ENCODE measurements at regions of chr1 and their contacts with region 1.

Region 1: GRCh38 chr1:109548321-109549267 is at the start of gene GNAI3:
- DNase-seq: peak; percentile 78 to 97 (median 95)
- ATAC-seq: peak; percentile 96
- H3K4me3 ChIP-seq: peak within 1 kb of the TSS; percentile 89
- H3K4me3 Mint-ChIP-seq: peak within 1 kb of the TSS; percentile 90 to 99 (median 97)
- H3K27ac ChIP-seq: peak within 1 kb of the TSS; percentile 93
- H3K27ac Mint-ChIP-seq: peak within 1 kb of the TSS; percentile 89 to 100 (median 99)
- H3K4me1 ChIP-seq: peaks cover 25 to 27% of the 10 kb centered on the region in 2 donors
- H3K4me1 Mint-ChIP-seq: peaks cover 30 to 75% (median 55%) of the 10 kb centered on the region in 7 donors
- H3K27me3 ChIP-seq: no peaks in the 10 kb centered on the region
- H3K27me3 Mint-ChIP-seq: no peaks in the 10 kb centered on the region
- total RNA-seq, gene GNAI3: 4.9 to 9.3 (median 7.0) TPM

Region 2: DNA sequence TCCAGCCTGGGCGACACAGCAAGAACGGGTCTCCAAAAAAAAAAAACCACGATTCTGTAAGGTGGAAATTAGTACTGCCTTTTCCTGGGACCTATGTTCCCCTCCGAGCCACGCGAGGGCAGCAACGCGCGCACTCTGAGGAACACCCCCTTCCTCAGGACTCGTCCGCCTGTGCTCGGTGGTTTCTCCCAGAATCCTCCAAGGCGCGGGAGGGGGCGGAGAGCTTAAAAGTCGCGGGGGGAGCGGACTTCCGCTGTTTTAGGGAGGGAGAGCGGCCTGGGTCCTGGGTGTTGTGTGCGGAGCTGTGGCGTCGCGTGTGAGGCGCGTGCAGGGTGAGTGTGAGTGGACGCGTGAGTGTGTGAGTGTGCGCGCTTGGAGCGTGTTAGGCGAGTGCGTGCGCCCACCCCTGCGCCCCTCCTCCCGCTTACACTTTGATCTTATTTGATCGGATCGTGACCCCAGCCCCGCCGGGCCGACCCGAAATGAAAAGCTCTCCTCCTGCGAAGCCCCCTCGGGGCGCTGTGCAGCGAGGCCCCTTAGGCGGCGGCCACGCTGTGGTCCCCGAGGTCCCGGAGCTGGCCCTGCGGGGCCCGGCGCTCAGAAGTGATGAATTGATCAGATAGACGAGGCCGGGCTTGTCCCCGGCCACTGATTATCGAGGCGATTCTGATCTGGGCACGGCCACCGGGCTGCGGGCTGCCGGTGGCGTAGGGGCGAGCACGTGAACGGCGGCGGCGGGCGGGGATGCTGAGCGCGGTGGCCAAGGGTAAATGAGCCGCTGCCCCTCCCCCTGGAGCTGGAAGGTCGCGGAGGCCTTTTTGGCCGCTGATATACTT is 448.4 kb before region 1 on chr1:
- CTCF ChIA-PET with region 1: no interaction called
- POLR2A ChIA-PET with region 1: interaction called, 6 read pairs
- intact Hi-C with region 1: loop called in 1 of 2 experiments (anchors 2 kb)
- DNase-seq: peak; percentile 90 to 98 (median 97)
- ATAC-seq: peak; percentile 98
- H3K4me3 ChIP-seq: peak overlapping the region; percentile 80
- H3K4me3 Mint-ChIP-seq: peak overlapping the region; percentile 93 to 99 (median 98)
- H3K27ac ChIP-seq: peak overlapping the region; percentile 88
- H3K27ac Mint-ChIP-seq: peak overlapping the region; percentile 92 to 99 (median 96)
- H3K4me1 ChIP-seq: peaks cover 0 to 5% of the 10 kb centered on the region in 2 donors
- H3K4me1 Mint-ChIP-seq: peaks cover 5 to 22% (median 13%) of the 10 kb centered on the region in 7 donors
- H3K27me3 ChIP-seq: no peaks in the 10 kb centered on the region
- H3K27me3 Mint-ChIP-seq: peaks cover 0 to 2% (median 0%) of the 10 kb centered on the region in 5 donors

Region 3: GRCh38 chr1:109161858-109162606 is 386.6 kb before region 1 on chr1:
- CTCF ChIA-PET with region 1: no interaction called
- POLR2A ChIA-PET with region 1: no interaction called
- intact Hi-C with region 1: no loop called
- DNase-seq: peak in 5 of 9 donors; percentile 5 to 45 (median 12)
- ATAC-seq: peak; percentile 88
- H3K4me3 ChIP-seq: no peak overlapping the region
- H3K4me3 Mint-ChIP-seq: peak overlapping the region in 6 of 10 donors; percentile 31 to 72 (median 52)
- H3K27ac ChIP-seq: no peak overlapping the region
- H3K27ac Mint-ChIP-seq: peak overlapping the region in 8 of 9 donors; percentile 58 to 87 (median 75)
- H3K4me1 ChIP-seq: peaks cover 0 to 14% of the 10 kb centered on the region in 2 donors
- H3K4me1 Mint-ChIP-seq: peaks cover 9 to 24% (median 18%) of the 10 kb centered on the region in 7 donors
- H3K27me3 ChIP-seq: no peaks in the 10 kb centered on the region
- H3K27me3 Mint-ChIP-seq: no peaks in the 10 kb centered on the region

Region 4: DNA sequence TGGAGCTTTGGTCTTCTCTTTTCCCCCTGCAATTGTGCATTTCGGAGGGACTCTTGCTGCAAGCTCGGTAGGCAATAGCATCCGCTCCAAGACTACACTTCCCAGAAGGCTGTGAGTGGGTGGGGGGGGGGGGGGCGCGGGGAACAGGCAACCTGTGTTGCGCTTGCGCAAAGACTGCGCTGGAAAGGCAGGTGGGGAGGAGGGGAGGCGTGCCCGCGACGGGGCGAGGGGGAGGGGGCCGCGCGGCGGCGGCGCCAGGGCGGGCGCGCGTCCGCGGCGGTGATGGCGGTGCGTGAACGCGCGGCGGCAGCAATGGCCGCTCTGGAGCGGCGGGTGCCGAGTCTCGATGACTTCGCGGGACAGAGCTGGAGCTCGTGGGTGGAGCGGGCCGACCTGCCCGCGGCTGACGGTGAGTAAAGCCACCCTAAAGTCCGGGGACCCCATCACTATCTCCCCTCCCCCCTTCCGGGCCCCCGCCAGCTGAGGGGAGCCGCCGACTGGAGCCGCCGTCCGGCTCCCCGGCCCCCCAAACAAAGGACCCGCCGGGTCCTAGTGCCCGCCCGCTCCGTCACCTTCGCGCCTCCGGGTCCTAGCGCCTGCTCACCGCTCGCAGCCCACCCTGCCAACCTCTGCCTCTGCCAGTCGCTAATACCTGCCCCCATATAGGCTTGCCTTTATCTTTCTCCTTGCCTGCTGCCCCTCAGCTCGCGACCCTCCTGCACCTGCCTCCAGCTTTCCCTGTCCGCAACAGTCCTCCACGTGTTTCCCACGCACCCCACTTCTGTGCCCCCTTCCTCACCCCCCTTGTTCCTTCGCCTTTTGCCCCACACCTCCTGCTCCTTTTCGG is 64.7 kb before region 1 on chr1 and contains the start of gene ATXN7L2:
- CTCF ChIA-PET with region 1: interaction called, 1,240 read pairs
- POLR2A ChIA-PET with region 1: interaction called, 15 read pairs
- intact Hi-C with region 1: loop called in 1 of 2 experiments (anchors 1 kb)
- DNase-seq: peak; percentile 89 to 95 (median 93)
- ATAC-seq: peak; percentile 91
- H3K4me3 ChIP-seq: peak within 1 kb of the TSS; percentile 98
- H3K4me3 Mint-ChIP-seq: peak within 1 kb of the TSS; percentile 93 to 99 (median 96)
- H3K27ac ChIP-seq: peak within 1 kb of the TSS; percentile 88
- H3K27ac Mint-ChIP-seq: peak within 1 kb of the TSS; percentile 83 to 97 (median 92)
- H3K4me1 ChIP-seq: peaks cover 9 to 14% of the 10 kb centered on the region in 2 donors
- H3K4me1 Mint-ChIP-seq: peaks cover 27 to 44% (median 35%) of the 10 kb centered on the region in 7 donors
- H3K27me3 ChIP-seq: no peaks in the 10 kb centered on the region
- H3K27me3 Mint-ChIP-seq: peaks cover 0 to 23% (median under 1%) of the 10 kb centered on the region in 5 donors
- total RNA-seq, gene ATXN7L2: 10.5 to 12.8 (median 11.7) TPM

Region 5: GRCh38 chr1:109564194-109564878 is 15.7 kb after region 1 on chr1:
- CTCF ChIA-PET with region 1: interaction called, 4 read pairs
- POLR2A ChIA-PET with region 1: interaction called, 22 read pairs
- intact Hi-C with region 1: loop called in 1 of 2 experiments (anchors 1 kb)
- DNase-seq: no peak
- ATAC-seq: no peak
- H3K4me3 ChIP-seq: no peak overlapping the region
- H3K4me3 Mint-ChIP-seq: peak overlapping the region in 4 of 10 donors; percentile 7 to 54 (median 27)
- H3K27ac ChIP-seq: no peak overlapping the region
- H3K27ac Mint-ChIP-seq: peak overlapping the region in 6 of 9 donors; percentile 16 to 66 (median 52)
- H3K4me1 ChIP-seq: peaks cover 12 to 13% of the 10 kb centered on the region in 2 donors
- H3K4me1 Mint-ChIP-seq: peaks cover 42 to 77% (median 64%) of the 10 kb centered on the region in 7 donors
- H3K27me3 ChIP-seq: no peaks in the 10 kb centered on the region
- H3K27me3 Mint-ChIP-seq: no peaks in the 10 kb centered on the region

Region 6: DNA sequence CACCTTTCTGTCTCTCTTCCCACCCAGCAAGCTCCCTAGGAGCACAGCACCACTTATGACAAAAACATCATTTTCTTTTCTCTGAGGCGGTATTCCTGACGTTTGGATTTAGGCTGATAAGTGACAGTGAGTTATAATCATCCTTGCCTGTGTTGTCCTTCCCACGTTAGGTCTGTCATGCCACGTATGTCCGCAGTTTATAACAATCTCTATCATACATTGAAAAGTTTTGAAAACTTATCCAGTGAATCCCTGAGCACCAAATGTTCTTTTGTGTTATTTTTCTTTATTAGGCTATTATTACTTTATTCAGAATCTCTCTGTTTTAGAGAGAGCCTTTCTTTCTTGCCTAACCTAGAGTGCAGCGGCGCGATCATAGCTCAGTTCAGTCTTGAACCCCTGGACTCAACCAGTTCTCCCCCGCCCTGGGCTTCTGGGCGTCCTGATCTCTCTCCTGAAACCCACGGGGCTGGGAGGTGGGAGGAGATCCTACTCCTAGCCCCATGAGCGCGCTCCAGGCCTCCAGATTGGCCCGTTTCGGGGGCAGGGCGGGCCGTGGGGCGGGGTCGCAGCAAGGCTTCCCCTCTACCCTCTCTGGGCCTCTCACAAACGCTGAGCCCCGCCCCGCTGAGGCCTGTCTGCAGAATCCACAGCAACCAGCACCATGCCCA is 119.0 kb after region 1 on chr1 and contains the start of gene GSTM2:
- CTCF ChIA-PET with region 1: interaction called, 3 read pairs
- POLR2A ChIA-PET with region 1: no interaction called
- intact Hi-C with region 1: loop called in 1 of 2 experiments (anchors 1 kb)
- DNase-seq: peak; percentile 49 to 87 (median 82)
- ATAC-seq: peak; percentile 100
- H3K4me3 ChIP-seq: peak within 1 kb of the TSS; percentile 52
- H3K4me3 Mint-ChIP-seq: peak within 1 kb of the TSS; percentile 75 to 92 (median 84)
- H3K27ac ChIP-seq: peak within 1 kb of the TSS; percentile 49
- H3K27ac Mint-ChIP-seq: peak within 1 kb of the TSS; percentile 38 to 90 (median 77)
- H3K4me1 ChIP-seq: peaks cover 0 to 11% of the 10 kb centered on the region in 2 donors
- H3K4me1 Mint-ChIP-seq: peaks cover 17 to 30% (median 24%) of the 10 kb centered on the region in 7 donors
- H3K27me3 ChIP-seq: no peaks in the 10 kb centered on the region
- H3K27me3 Mint-ChIP-seq: no peaks in the 10 kb centered on the region
- total RNA-seq, gene GSTM2: 52.2 to 201 (median 109) TPM

Region 7: DNA sequence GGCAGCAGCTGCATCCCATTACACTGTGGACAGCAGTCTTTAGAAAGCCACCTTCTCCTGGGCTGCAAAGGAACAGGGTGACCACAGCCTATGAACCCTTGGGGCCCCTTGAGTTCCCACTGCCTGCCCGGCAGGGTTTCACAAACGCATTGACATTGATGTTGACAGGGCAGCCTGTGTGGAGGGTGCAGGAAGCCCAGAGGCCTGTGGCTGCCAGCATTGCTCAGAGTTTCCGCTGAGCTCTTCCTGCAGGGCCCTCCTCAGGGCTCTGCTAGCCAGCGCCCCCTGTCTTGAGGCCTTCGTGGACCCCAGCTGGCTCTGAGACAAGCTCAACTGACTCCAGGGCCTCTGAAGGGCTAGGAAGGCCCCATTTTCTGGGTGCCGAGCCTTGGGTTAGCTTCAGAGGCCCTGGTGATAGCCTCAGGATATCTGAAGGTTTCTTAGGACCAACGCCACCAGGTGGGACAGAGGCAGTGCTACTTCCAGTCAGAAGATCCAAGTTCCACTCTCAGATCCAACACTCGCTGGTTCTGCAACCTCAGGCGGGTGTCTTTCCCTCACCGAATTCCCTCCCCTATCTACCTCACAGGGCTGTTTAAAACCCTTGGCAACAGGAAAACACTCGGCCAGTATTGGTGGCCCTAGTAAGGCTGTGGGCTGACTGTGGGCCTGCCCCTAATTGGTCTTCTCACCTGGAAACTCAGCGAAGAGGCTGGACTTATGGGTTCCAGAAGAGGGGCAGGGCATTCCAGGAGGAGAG is 242.3 kb after region 1 on chr1:
- CTCF ChIA-PET with region 1: interaction called, 3 read pairs
- POLR2A ChIA-PET with region 1: no interaction called
- intact Hi-C with region 1: loop called (anchors 5 kb)
- DNase-seq: peak; percentile 47 to 78 (median 67)
- ATAC-seq: peak; percentile 93
- H3K4me3 ChIP-seq: peak overlapping the region; percentile 1
- H3K4me3 Mint-ChIP-seq: peak overlapping the region in 8 of 10 donors; percentile 26 to 62 (median 40)
- H3K27ac ChIP-seq: peak overlapping the region; percentile 44
- H3K27ac Mint-ChIP-seq: peak overlapping the region in 8 of 9 donors; percentile 49 to 94 (median 84)
- H3K4me1 ChIP-seq: peaks cover 51 to 52% of the 10 kb centered on the region in 2 donors
- H3K4me1 Mint-ChIP-seq: peaks cover 38 to 88% (median 71%) of the 10 kb centered on the region in 7 donors
- H3K27me3 ChIP-seq: no peaks in the 10 kb centered on the region
- H3K27me3 Mint-ChIP-seq: no peaks in the 10 kb centered on the region

Region 8: DNA sequence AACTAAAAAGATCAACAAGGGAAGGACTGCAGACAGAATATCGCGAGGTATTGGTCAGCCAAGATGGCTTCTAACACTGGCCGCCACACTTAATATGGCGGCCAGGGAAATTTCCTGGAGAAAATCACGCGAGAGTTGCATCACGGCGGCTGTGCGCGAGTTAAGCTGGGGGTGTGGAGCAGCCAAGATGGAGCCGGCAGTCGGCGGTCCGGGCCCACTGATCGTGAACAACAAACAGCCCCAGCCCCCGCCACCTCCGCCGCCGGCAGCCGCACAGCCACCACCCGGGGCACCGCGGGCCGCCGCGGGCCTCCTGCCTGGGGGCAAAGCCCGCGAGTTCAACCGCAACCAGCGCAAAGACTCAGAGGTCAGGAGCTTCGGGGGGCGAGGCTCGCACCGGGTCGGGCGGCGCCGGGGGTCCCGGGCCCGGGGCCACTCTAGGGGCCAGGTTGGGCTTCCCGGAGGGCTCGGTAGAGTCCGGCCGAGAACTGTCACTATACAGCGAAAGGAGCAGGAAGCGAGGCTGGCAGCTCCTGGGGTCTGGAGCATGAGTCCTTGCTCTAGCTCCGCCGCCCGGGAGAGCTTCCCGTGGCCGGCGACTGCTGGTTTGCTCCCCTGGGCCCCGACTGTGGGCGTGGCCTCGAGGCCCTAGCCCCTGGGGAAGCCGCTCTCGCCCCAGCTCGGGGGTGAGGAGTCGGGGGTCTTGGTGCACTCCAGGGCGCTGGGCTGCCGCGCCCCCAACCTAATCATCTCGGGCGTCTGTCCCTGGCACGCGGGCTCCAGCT is 486.0 kb after region 1 on chr1 and contains the start of gene STRIP1:
- CTCF ChIA-PET with region 1: no interaction called
- POLR2A ChIA-PET with region 1: interaction called, 3 read pairs
- intact Hi-C with region 1: loop called (anchors 1 kb)
- DNase-seq: peak; percentile 78 to 96 (median 93)
- ATAC-seq: peak; percentile 97
- H3K4me3 ChIP-seq: peak within 1 kb of the TSS; percentile 48
- H3K4me3 Mint-ChIP-seq: peak within 1 kb of the TSS; percentile 92 to 98 (median 95)
- H3K27ac ChIP-seq: peak within 1 kb of the TSS; percentile 97
- H3K27ac Mint-ChIP-seq: peak within 1 kb of the TSS; percentile 81 to 98 (median 95)
- H3K4me1 ChIP-seq: peaks cover 31% of the 10 kb centered on the region in 2 donors
- H3K4me1 Mint-ChIP-seq: peaks cover 32 to 70% (median 57%) of the 10 kb centered on the region in 7 donors
- H3K27me3 ChIP-seq: no peaks in the 10 kb centered on the region
- H3K27me3 Mint-ChIP-seq: no peaks in the 10 kb centered on the region
- total RNA-seq, gene STRIP1: 42.4 to 83.9 (median 70.7) TPM

Measured in naive thymus-derived CD4-positive, alpha-beta T cell (primary cell).